HCT116 (cell line): ENCODE measurements at regions of chr2 and their contacts with region 1.

Region 1: DNA sequence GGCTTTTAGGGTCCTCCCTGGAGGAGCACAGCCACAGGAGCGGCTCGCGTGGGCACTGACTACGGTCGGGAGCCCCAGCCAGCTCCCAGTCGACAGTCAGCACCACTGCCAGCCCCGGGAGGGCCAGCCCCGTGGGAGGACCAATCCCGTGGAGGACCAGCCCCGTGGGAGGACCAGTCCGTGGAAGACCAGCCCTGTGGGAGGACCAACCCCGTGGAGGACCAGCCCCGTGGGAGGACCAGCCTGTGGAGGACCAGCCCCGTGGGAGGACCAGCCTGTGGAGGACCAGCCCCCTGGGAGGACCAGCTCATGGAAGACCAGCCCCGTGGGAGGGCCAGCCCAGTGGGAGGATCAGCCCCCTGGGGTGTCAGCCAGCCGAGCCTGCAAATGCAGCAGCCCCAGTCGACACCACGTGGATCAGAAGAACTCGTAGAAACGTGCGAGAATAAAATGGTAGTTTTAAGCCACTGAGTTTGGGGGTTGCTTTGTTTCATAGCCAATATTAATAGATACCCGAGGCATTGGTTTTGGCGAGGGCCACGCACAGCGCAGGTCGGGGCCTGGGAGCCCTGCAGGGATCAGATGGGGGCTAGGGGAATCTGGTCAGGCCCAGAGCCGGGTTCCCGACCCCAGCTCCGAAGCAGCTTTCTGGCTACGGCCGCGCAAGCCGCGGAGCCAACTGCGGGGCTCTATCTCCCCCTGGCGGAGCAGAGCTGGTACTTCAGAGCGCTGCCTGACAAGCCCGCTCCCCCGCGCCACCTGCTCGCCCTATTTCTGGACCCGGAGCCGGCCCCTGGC is 73.0 kb downstream of the TEX51 start:
- DNase-seq: peak; percentile 47
- ATAC-seq: peak; percentile 92
- H3K4me3 ChIP-seq: peak overlapping the region; percentile 35 to 46
- H3K27ac ChIP-seq: no peak overlapping the region
- H3K4me1 ChIP-seq: peaks cover 2 to 12% of the 10 kb centered on the region in 2 experiments; a peak in 2 of 4 replicates
- H3K27me3 ChIP-seq: peaks cover 32% of the 10 kb centered on the region; the same call in 1 of the 2 replicates
- CTCF ChIP-seq: peak; percentile 60 to 88 (median 88)
- POLR2A ChIP-seq: no peak
- RAD21 ChIP-seq: peak; percentile 86

Region 2: DNA sequence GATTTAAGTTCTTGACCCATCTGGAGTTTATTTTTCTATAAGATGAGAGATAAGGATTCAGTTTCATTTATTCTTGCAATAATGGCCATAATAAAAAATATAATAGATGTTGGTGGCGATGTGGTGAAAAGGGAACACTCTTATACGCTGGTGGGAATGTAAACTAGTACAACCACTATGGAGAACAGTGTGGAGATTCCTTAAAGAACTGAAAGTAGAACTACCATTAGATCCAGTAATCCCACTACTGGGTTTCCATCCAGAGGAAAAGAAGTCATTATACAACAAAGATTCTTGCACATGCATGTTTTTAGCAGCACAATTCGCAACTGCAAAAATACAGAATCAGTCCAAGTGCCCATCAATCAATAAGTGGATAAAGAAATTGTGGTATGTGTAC is 1356.2 kb before region 1 on chr2:
- CTCF ChIA-PET with region 1: no interaction called
- POLR2A ChIA-PET with region 1: no interaction called
- RAD21 ChIA-PET with region 1: no interaction called
- intact Hi-C with region 1: no loop called
- DNase-seq: no peak
- ATAC-seq: no peak
- H3K4me3 ChIP-seq: no peak overlapping the region
- H3K27ac ChIP-seq: no peak overlapping the region
- H3K4me1 ChIP-seq: no peaks in the 10 kb centered on the region
- H3K27me3 ChIP-seq: no peaks in the 10 kb centered on the region
- CTCF ChIP-seq: no peak
- POLR2A ChIP-seq: no peak
- RAD21 ChIP-seq: no peak

Region 3: DNA sequence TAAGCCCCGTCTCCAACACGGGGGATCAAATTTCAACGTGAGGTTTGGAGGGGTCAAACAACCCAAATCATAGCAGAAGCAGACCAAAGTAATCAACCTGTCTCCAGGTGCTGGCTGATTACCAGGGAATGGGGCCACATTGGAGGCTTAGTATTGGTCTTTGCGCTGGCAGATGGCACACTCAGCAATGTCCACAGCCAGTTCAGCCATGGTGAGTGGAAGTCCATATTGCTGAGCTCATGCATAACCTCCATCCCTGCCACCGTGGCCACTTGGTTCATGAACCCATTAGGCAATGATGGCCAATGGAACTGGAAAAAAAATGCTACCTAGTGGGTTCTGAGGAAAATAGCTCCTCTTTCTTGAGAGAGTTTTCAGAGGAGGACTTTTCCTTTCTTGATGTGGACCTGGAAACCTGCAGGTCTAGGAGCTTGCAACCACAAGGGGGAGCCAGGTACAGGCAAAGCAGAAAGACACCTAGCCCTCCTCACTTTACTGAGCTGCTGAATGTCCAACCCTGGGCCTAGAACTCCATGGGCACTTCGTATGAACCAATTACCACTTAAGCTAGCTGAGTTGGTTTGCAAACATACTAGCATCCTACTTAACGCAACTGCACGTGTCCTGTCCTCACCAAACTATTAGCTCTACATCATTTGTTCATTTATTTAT is 443.7 kb before region 1 on chr2:
- CTCF ChIA-PET with region 1: interaction called, 31 read pairs
- POLR2A ChIA-PET with region 1: no interaction called
- RAD21 ChIA-PET with region 1: no interaction called
- intact Hi-C with region 1: loop called (anchors 5 kb)
- DNase-seq: peak; percentile 13
- ATAC-seq: peak; percentile 74
- H3K4me3 ChIP-seq: no peak overlapping the region
- H3K27ac ChIP-seq: no peak overlapping the region
- H3K4me1 ChIP-seq: no peaks in the 10 kb centered on the region
- H3K27me3 ChIP-seq: no peaks in the 10 kb centered on the region
- CTCF ChIP-seq: peak; percentile 28 to 63 (median 62); a peak in 5 of 6 replicates
- POLR2A ChIP-seq: no peak
- RAD21 ChIP-seq: peak; percentile 48

Region 4: DNA sequence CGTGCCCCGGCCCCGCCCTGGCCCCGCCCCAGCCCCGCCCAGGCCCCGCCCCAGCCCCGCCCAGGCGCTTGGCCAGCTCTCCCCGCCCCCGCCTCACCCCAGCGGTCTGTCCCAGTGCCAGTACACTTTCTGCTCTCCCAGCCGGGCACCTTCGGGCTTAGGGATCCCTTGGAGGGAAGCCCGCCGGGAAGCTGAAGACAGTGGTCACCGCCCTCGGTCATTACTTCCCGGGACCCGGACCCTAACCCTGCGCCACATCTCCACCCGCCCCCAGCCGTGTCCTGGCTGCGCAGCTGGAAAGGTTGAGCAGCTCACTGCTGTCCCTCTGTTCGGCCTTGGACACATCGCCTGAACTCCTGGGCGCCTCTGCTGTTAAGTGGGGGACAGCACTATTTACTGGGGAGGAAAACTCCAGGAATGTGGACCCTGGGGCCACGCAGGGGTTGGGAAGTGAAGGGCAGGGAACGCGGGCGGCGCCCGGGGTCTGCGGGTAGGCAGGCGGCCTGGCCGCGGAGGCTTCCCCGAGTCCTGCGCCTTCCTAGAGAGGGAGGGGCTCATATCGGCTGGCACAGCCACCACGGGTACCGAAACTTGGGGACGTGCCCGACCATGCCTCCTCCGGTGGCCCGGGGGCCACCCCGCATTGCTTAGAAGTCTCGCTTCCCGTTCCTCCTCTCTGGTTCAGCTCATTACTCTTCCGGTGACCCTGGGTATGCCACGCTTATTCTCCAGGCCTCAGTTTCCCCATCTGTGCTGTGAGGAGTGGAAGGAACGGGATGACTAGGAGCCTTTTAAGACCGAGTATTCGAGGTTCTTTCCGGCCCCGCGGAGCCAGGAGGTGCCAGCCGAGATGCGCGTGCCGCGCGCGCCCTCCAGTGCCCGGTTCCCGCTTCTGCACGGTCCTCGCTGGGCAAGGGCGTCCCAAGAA is 194.7 kb before region 1 on chr2:
- CTCF ChIA-PET with region 1: interaction called, 7 read pairs
- POLR2A ChIA-PET with region 1: no interaction called
- RAD21 ChIA-PET with region 1: no interaction called
- intact Hi-C with region 1: loop called (anchors 10 kb)
- DNase-seq: peak; percentile 22
- ATAC-seq: peak; percentile 95
- H3K4me3 ChIP-seq: no peak overlapping the region
- H3K27ac ChIP-seq: no peak overlapping the region; the same call in 1 of the 2 replicates
- H3K4me1 ChIP-seq: no peaks in the 10 kb centered on the region
- H3K27me3 ChIP-seq: no peaks in the 10 kb centered on the region
- CTCF ChIP-seq: peak; percentile 45 to 97 (median 91); a peak in 5 of 6 replicates
- POLR2A ChIP-seq: no peak
- RAD21 ChIP-seq: peak; percentile 91

Region 5: GRCh38 chr2:127174136-127174535 is 202.5 kb after region 1 on chr2:
- CTCF ChIA-PET with region 1: interaction called, 4 read pairs
- POLR2A ChIA-PET with region 1: no interaction called
- RAD21 ChIA-PET with region 1: no interaction called
- intact Hi-C with region 1: loop called (anchors 2 kb)
- DNase-seq: no peak
- ATAC-seq: peak; percentile 88
- H3K4me3 ChIP-seq: no peak overlapping the region
- H3K27ac ChIP-seq: no peak overlapping the region
- H3K4me1 ChIP-seq: no peaks in the 10 kb centered on the region; a peak in 1 of 4 replicates
- H3K27me3 ChIP-seq: no peaks in the 10 kb centered on the region
- CTCF ChIP-seq: peak; percentile 24 to 33 (median 31); a peak in 2 of 6 replicates
- POLR2A ChIP-seq: no peak
- RAD21 ChIP-seq: peak; percentile 73

Region 6: GRCh38 chr2:127208313-127208712 is 236.6 kb after region 1 on chr2:
- CTCF ChIA-PET with region 1: no interaction called
- POLR2A ChIA-PET with region 1: no interaction called
- RAD21 ChIA-PET with region 1: no interaction called
- intact Hi-C with region 1: no loop called
- DNase-seq: no peak
- ATAC-seq: no peak
- H3K4me3 ChIP-seq: no peak overlapping the region
- H3K27ac ChIP-seq: no peak overlapping the region
- H3K4me1 ChIP-seq: peaks cover 0 to 5% of the 10 kb centered on the region in 2 experiments; a peak in 1 of 4 replicates
- H3K27me3 ChIP-seq: no peaks in the 10 kb centered on the region
- CTCF ChIP-seq: no peak
- POLR2A ChIP-seq: no peak
- RAD21 ChIP-seq: no peak

Region 7: DNA sequence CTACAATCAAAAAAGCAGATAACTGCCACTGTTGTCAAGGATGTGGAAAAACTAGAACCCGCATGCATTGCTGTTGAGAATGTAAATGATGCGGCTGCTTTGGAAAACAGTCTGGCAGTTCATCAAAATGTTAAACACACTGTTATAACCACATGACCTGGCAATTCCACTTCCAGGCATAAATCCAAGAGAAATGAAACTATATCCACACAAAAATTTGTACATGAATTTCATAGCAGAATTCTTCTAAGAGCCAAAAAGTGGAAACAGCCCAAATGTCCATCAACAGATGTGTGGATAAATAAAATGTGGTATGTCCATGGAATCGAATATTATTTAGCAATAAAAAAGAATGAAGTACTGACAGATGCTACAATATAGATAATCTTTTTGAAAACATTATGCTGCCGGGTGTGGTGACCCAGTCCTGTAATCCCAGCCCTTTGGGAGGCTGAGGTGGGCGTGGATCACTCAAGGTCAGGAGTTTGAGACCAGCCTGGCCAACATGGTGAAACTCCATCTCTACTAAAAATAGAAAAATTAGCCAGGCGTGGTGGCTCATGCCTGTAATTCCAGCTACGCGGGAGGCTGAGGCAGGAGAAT is 290.2 kb after region 1 on chr2:
- CTCF ChIA-PET with region 1: no interaction called
- POLR2A ChIA-PET with region 1: no interaction called
- RAD21 ChIA-PET with region 1: no interaction called
- intact Hi-C with region 1: no loop called
- DNase-seq: no peak
- ATAC-seq: no peak
- H3K4me3 ChIP-seq: no peak overlapping the region
- H3K27ac ChIP-seq: no peak overlapping the region
- H3K4me1 ChIP-seq: no peaks in the 10 kb centered on the region
- H3K27me3 ChIP-seq: no peaks in the 10 kb centered on the region
- CTCF ChIP-seq: no peak
- POLR2A ChIP-seq: no peak
- RAD21 ChIP-seq: no peak